Activated naive CD4-positive, alpha-beta T cell treated with anti-CD3 and anti-CD28 coated beads, Interleukin-2, amount 10 ng/mL, durations not matched to agents 7 days and 5 days (primary cell): ENCODE measurements at regions of chr12 and their contacts with region 1.

Region 1: DNA sequence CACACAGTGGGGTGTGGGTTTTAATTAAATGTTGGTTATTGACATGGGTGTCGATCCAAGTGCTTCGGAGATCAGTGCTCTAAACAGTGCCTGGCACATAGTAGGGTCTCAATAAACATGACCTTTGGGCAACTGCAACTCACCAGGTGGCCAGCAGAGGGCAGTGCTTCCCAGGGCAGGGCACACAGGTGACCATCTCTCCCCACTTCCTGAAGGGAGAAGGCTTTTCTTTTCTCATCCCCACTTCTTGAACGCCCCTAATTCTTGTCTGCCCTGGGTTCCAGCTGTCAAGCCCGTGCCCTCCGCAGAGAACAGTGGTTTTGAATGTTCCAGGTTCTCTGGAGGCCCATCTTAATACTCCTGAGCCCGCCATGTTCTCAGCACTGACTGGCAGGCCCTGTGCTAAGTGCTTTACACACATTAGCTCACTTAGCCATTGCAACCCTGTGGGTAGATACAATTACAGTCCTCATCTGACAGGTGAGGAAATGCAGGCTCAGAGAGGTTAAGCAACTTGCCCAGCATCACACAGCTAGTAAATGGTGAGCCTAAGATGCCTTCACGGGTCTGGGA is 16.3 kb downstream of the RAPGEF3 start:
- DNase-seq: peak; percentile 86
- H3K4me3 Mint-ChIP-seq: no peak overlapping the region
- H3K27ac Mint-ChIP-seq: no peak overlapping the region
- H3K4me1 Mint-ChIP-seq: peaks cover 8% of the 10 kb centered on the region
- H3K27me3 Mint-ChIP-seq: peaks cover 64% of the 10 kb centered on the region

Region 2: GRCh38 chr12:47302111-47302671 is 440.1 kb before region 1 on chr12:
- CTCF ChIA-PET with region 1: no interaction called
- DNase-seq: no peak
- H3K4me3 Mint-ChIP-seq: no peak overlapping the region
- H3K27ac Mint-ChIP-seq: no peak overlapping the region
- H3K4me1 Mint-ChIP-seq: peaks cover 64% of the 10 kb centered on the region
- H3K27me3 Mint-ChIP-seq: no peaks in the 10 kb centered on the region

Region 3: DNA sequence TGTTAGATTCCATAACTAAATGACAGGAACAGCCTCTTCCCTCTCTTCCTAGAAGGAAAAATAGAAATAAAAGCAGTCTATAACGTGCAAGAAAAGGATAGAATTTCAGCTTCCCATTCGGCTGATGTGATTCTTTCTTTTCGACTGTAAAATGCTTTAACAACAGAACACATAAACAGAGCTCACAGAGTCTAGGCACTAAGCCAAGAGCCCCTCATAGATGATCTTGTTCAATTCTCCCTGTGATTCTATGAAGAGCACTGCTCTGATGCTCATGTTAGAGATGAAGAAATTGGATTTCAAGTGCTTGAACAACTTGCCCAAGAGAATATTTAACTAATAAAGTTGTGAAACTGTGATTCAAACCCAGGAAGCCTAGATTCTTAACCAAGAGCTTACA is 269.2 kb before region 1 on chr12:
- CTCF ChIA-PET with region 1: no interaction called
- DNase-seq: no peak
- H3K4me3 Mint-ChIP-seq: no peak overlapping the region
- H3K27ac Mint-ChIP-seq: no peak overlapping the region
- H3K4me1 Mint-ChIP-seq: no peaks in the 10 kb centered on the region
- H3K27me3 Mint-ChIP-seq: no peaks in the 10 kb centered on the region

Region 4: GRCh38 chr12:47725893-47726292 is 16.4 kb before region 1 on chr12:
- CTCF ChIA-PET with region 1: interaction called, 76 read pairs
- DNase-seq: no peak
- H3K4me3 Mint-ChIP-seq: no peak overlapping the region
- H3K27ac Mint-ChIP-seq: no peak overlapping the region
- H3K4me1 Mint-ChIP-seq: peaks cover 16% of the 10 kb centered on the region
- H3K27me3 Mint-ChIP-seq: peaks cover 6% of the 10 kb centered on the region

Region 5: DNA sequence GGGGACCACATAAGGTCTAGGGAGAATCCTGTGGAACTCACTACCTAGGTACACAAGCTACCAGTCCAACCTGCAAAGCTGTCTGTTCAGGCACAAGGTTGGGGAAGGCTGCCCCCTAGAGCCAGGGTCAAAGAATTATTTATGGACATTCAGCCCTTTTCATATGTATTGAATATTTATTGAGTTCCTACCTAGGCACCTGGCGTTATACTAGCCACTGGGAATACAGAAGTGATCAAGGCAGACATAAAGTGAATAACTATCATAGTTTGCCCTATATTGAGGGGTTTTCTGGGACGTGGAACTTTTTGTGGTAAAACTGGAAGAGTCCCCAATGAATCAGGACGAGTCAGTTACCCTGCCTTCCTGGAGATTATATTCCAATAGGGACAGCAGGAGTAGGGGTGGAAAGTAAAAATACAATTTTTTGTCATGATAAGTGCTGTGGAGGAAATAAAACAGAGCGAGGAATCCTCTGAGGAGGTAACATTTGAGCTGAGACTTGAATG is 24.9 kb after region 1 on chr12:
- CTCF ChIA-PET with region 1: interaction called, 597 read pairs
- DNase-seq: peak; percentile 86
- H3K4me3 Mint-ChIP-seq: no peak overlapping the region
- H3K27ac Mint-ChIP-seq: no peak overlapping the region
- H3K4me1 Mint-ChIP-seq: peaks cover 16% of the 10 kb centered on the region
- H3K27me3 Mint-ChIP-seq: peaks cover 46% of the 10 kb centered on the region

Region 6: GRCh38 chr12:47797441-47797840 is 55.1 kb after region 1 on chr12:
- CTCF ChIA-PET with region 1: interaction called, 29 read pairs
- DNase-seq: peak; percentile 50
- H3K4me3 Mint-ChIP-seq: no peak overlapping the region
- H3K27ac Mint-ChIP-seq: peak overlapping the region; percentile 90
- H3K4me1 Mint-ChIP-seq: peaks cover 46% of the 10 kb centered on the region
- H3K27me3 Mint-ChIP-seq: no peaks in the 10 kb centered on the region

Region 7: DNA sequence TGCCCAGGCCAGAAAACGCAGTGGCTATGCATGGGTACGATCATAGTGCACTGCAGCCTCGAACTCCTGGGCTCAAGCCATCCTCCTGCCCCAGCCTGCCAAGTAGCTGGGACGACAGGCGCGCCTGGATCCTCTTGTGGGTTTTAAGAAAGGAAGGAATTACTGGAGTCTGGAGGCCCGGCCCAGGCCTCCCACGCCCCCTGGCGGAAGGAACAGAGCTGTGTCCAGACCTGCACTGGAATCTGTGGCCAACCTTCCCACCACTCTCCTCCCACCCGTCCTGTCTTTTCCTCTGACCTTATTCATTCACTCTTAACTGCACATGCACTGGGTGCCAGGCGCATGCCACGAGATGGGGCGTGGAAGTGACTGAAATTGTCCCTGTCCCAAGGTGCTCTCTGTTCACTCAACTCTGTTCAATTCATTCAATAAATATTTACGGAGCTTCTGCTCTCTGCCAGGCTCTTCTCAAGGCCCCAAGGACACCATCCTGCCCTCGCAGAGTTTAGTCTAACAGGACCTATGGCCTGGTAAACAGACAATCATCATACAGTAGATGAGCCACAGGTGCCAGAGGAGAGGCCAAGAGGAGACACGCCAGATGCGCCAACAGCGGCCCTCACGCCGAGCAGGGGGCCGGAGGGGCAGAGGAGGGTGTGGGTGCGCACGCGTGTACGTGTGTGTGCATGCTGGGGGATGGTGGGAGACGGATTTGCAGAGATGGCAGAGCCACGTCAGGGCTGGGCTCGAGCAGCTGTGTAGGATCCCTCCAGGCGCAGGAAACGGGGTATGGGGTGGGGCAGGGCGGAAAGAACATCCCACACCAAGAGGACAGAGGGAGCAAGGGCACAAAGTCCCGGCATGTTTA is 207.3 kb after region 1 on chr12:
- CTCF ChIA-PET with region 1: interaction called, 35 read pairs
- DNase-seq: peak; percentile 64
- H3K4me3 Mint-ChIP-seq: no peak overlapping the region
- H3K27ac Mint-ChIP-seq: no peak overlapping the region
- H3K4me1 Mint-ChIP-seq: peaks cover 6% of the 10 kb centered on the region
- H3K27me3 Mint-ChIP-seq: peaks cover 72% of the 10 kb centered on the region